Activated CD4-positive, alpha-beta T cell treated with anti-CD3 and anti-CD28 coated beads, Interleukin-2, amount 10 ng/mL, durations not matched to agents 7 days and 5 days (primary cell): ENCODE measurements at regions of chr1 and their contacts with region 1.

Region 1: DNA sequence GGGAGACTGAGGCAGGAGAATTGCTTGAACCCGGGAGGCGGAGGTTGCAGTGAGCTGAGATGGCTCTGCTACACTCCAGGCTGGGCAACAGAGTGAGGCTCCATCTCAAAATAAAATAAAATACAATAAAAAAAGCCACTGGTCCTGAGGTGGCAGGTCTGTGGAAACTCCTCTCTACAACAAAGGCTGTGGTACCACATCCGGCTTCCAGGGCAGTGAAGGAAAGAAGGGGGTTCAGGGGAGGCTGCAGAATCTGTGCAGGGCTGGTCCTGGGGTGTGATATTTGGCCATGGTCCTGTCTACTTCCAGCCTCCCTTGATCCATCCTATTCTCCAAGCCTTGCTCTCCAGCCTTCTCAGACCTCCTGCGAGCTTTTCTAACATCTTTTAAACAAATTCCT is 731 bp upstream of the ZNF683 start:
- DNase-seq: peak; percentile 72
- H3K4me3 Mint-ChIP-seq: peak overlapping the region; percentile 31
- H3K27ac Mint-ChIP-seq: peak overlapping the region; percentile 87
- H3K4me1 Mint-ChIP-seq: peaks cover 84% of the 10 kb centered on the region
- H3K27me3 Mint-ChIP-seq: no peaks in the 10 kb centered on the region

Region 2: DNA sequence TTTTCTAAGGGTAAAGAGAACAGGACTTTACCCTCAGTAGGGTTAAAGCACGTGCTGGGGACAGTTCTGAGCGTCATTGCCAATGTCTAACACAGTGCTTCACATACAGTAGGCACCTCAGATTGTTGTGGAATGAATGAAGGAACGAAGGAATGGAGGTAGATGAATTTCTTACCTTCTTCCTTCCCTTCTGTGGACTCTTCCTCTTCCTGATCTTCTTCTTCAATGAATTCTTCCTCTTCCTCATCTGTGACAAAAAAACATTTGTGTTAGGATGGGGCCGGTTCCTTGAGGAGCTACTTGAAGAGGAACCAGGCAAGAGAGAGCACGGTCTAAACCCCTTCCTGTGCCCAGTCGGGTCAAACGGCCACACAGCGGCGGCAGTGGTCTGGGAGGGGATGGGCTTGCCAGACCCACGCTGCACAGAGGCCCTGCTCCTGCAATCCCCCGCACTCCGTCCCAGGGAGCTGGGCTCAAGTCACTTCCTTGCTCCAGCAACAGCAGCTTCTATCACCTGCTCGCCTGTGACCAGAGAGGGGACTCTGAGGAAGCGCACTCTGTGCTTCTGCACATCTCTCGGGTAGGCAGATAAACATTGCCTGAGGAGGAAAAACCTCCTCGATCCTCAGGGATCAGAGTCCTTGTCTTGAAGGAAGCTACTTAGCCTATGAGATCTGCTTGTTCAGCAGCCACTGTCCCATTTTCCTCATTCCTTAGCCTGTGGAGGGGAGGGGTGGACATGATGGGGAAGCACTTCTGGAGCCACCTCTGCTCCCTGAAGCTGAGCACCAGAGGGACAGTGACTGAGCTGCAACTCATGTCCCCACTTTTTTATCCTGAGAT is 319.3 kb before region 1 on chr1:
- CTCF ChIA-PET with region 1: no interaction called
- POLR2A ChIA-PET with region 1: no interaction called
- DNase-seq: no peak
- H3K4me3 Mint-ChIP-seq: no peak overlapping the region
- H3K27ac Mint-ChIP-seq: no peak overlapping the region
- H3K4me1 Mint-ChIP-seq: peaks cover 7% of the 10 kb centered on the region
- H3K27me3 Mint-ChIP-seq: peaks cover 51% of the 10 kb centered on the region

Region 3: GRCh38 chr1:26358411-26359384 is 14.6 kb before region 1 on chr1:
- CTCF ChIA-PET with region 1: interaction called, 33 read pairs
- POLR2A ChIA-PET with region 1: no interaction called
- DNase-seq: peak; percentile 82
- H3K4me3 Mint-ChIP-seq: no peak overlapping the region
- H3K27ac Mint-ChIP-seq: peak overlapping the region; percentile 73
- H3K4me1 Mint-ChIP-seq: peaks cover 52% of the 10 kb centered on the region
- H3K27me3 Mint-ChIP-seq: peaks cover 31% of the 10 kb centered on the region

Region 4: DNA sequence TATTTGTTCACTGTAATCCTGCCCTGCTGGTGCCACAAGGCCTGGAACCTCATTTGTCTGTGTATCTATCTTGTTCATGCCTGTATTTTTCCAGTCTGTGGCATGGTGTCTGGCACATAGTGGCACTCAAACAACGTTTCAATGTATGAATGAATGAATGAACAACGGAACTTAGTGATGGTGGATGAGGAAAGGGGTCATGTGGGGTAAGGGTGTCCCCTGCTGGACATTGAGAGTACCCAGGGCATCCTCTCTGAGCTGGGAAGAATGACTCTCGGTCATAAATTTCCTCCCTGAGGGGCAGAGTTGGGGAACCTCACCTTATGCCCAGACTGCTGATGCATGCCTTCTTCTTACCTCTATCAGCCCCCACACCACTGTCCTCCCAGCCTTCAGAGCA is 18.2 kb after region 1 on chr1:
- CTCF ChIA-PET with region 1: interaction called, 11 read pairs
- POLR2A ChIA-PET with region 1: no interaction called
- DNase-seq: peak; percentile 69
- H3K4me3 Mint-ChIP-seq: no peak overlapping the region
- H3K27ac Mint-ChIP-seq: peak overlapping the region; percentile 43
- H3K4me1 Mint-ChIP-seq: peaks cover 52% of the 10 kb centered on the region
- H3K27me3 Mint-ChIP-seq: peaks cover 6% of the 10 kb centered on the region

Region 5: DNA sequence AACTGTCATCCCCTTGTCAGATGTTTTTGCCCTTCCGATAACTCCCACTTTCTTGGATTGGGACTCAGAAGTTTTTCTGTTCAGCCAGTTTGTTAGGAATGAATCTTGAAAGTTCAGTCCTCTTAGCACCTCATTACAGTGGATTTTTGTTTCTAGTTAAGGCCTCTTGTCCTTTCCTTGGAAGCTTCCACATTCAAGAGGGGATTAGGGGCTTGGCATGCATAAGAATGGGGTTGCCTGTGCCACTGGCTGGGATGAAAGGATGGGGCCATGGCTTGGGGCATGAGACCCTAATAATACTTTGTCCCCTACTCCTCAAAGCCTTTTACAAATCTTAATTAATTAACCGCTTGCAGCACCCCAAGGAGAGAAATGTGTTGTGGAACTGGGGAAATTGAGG is 56.4 kb after region 1 on chr1:
- CTCF ChIA-PET with region 1: no interaction called
- POLR2A ChIA-PET with region 1: no interaction called
- DNase-seq: no peak
- H3K4me3 Mint-ChIP-seq: no peak overlapping the region
- H3K27ac Mint-ChIP-seq: no peak overlapping the region
- H3K4me1 Mint-ChIP-seq: peaks cover 23% of the 10 kb centered on the region
- H3K27me3 Mint-ChIP-seq: peaks cover 11% of the 10 kb centered on the region